Left cardiac atrium (tissue), 4 donors: ENCODE measurements at regions of chr17 and their contacts with region 1.

Region 1: DNA sequence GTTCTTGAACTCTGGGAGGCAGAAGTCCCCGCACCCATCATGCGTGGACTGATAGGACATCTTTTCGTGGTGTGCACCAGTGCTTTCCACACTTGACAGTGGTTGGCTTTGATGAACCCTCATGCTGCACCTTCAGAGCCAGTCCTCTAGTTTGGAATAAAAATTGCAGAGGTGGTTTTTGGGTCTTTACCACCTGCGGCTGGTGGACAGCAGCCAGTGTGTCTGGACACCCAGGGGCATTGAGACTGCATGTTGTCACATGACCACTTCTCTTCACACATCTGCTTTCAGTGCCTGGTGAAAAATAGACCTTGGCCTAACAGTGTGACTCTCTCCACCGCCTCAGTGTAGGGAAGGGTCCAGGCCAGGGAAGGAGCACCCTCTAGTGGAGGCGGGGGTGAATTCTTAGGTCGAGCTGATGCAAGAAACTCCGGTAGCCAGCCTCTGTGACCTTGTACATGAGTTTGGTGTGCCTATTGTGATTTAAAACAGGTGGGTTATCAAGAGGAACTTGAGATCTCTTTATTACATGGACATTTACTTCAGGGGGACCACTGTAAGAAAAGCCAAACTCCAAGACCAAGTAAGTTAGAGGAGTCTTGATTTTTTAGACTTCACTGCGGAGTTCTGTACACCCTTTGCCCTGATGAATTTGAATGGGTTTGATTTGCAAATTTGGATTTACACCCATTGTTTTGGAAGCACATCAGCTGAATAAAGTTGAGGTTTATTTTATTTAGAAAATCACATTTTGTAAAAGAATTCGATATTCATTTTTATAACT is 17.9 kb downstream of the GOSR2 start:
- DNase-seq: peak; percentile 80
- ATAC-seq: peak; percentile 70 to 83

Region 2: DNA sequence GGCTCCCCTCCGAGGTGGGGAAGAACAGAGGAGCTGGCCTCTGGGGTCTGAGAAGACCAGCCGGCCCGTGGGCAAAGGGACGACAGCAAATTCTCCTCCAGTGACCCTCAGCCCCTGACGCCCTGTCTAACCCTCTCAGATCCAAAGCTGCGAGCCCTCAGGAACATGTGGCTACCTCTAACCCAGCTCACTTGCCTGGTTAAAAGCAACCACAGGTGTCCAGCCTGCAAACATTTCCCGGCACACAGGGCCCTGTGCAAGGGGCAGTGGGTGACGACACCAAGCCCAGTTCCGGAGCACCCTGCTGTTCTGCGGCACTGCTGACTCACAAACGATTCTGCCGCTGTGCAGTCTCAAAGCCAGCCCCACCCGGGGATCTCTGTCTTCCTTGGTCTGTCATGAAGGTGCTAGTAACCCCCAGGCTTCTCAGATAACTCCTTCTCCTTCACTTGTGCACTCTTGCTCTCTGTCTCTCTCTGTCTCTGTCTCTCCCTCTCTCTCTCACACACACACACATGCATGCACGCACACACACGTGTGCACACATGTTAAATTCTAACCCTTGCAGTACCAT is 145.3 kb before region 1 on chr17:
- intact Hi-C with region 1: no loop called
- DNase-seq: no peak
- ATAC-seq: no peak

Region 3: GRCh38 chr17:46841561-46842379 is 99.0 kb before region 1 on chr17:
- intact Hi-C with region 1: loop called (anchors 2 to 5 kb)
- DNase-seq: peak; percentile 34
- ATAC-seq: peak; percentile 44 to 75

Region 4: DNA sequence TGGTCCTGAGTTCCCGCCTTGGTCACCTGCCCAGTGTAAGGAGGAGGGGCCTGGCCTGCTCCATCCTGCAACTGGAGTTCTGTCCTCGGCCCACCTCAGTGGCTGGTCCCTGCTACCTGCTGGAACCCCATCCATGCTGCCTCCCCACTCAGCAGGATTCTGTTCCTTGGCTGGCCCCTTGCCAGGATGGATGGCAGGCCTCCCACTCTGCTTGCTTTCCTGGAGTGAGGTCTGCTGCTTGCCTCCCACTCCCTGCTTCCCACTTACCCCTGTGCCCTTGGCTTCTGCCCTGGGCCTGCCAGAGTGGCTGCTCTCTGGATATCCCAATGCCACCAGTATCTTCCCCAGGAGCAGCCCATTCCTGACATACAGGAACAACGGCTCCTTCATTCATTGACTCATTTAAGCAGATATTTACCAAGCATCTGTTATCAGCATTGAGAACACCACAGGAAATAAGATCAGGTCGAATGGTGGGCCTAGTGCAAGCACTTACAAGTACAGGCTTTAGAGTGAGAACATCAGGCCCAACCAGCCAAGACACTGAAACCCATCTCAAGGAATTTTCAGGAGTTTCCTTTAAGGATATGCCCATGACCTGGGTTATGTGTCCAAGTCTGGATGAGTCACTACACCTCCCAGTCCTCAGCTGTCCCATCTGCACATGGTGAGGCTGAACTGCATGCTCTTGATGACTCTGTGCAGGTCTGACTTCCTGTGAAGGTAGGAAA is 55.2 kb after region 1 on chr17:
- intact Hi-C with region 1: loop called (anchors 2 to 5 kb)
- DNase-seq: no peak
- ATAC-seq: no peak

Region 5: GRCh38 chr17:47004906-47005305 is 64.1 kb after region 1 on chr17:
- intact Hi-C with region 1: loop called (anchors 2 to 5 kb)
- DNase-seq: no peak
- ATAC-seq: no peak